Vagina (tissue), 2 donors: ENCODE measurements at regions of chr5 and their contacts with region 1.

Region 1: GRCh38 chr5:68170826-68171558 is 44.6 kb upstream of the PIK3R1 start:
- DNase-seq: peak in 1 of 2 donors; percentile 98
- H3K4me3 ChIP-seq: no peak overlapping the region
- H3K27ac ChIP-seq: peak overlapping the region; percentile 68
- H3K4me1 ChIP-seq: peaks cover 21% of the 10 kb centered on the region
- H3K27me3 ChIP-seq: no peaks in the 10 kb centered on the region
- CTCF ChIP-seq: no peak
- POLR2A ChIP-seq: no peak

Region 2: DNA sequence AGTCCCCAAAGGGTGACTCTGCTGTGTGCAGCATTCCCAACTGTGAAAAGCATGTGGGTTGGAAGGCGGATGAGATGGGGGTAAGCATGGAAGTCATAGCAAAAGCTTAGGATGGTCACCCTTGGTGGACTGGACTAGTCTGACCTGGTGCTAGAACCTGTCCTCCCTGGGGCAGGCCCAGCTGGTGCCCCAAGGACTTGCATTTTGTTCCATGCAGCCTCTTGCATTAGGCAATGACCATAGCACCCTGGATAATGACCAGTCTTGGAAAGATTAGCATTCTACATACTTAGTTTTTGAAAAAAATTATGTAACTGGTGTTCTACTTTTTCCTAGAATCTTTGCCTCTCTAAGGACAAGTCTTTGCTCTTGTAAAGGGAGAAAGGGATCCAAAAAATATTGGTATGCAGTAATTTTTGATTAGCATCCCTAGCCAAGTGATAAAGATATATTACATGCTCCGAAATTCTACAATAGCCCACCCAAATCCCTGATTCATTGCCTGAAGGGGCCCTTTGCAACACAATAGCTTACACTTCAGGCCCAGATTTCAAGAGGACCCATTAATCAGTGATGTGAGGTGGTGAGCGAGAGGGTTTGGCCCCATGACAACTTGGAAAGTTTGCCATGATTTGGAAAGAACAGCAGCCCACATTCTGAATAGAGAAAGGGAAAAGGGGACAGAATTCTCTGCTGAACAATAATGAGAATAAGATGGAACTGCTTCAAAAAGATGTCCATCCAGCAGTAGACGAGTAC is 881.0 kb before region 1 on chr5:
- intact Hi-C with region 1: loop called (anchors 5 kb)
- DNase-seq: no peak
- H3K4me3 ChIP-seq: no peak overlapping the region
- H3K27ac ChIP-seq: no peak overlapping the region
- H3K4me1 ChIP-seq: peaks cover 14% of the 10 kb centered on the region
- H3K27me3 ChIP-seq: no peaks in the 10 kb centered on the region
- CTCF ChIP-seq: no peak
- POLR2A ChIP-seq: no peak

Region 3: GRCh38 chr5:68392617-68393016 is 221.6 kb after region 1 on chr5:
- intact Hi-C with region 1: no loop called
- DNase-seq: no peak
- H3K4me3 ChIP-seq: no peak overlapping the region
- H3K27ac ChIP-seq: no peak overlapping the region
- H3K4me1 ChIP-seq: no peaks in the 10 kb centered on the region
- H3K27me3 ChIP-seq: no peaks in the 10 kb centered on the region
- CTCF ChIP-seq: no peak
- POLR2A ChIP-seq: no peak